ENCODE measurements at regions of chr1 and their contacts with region 1.

Region 1: DNA sequence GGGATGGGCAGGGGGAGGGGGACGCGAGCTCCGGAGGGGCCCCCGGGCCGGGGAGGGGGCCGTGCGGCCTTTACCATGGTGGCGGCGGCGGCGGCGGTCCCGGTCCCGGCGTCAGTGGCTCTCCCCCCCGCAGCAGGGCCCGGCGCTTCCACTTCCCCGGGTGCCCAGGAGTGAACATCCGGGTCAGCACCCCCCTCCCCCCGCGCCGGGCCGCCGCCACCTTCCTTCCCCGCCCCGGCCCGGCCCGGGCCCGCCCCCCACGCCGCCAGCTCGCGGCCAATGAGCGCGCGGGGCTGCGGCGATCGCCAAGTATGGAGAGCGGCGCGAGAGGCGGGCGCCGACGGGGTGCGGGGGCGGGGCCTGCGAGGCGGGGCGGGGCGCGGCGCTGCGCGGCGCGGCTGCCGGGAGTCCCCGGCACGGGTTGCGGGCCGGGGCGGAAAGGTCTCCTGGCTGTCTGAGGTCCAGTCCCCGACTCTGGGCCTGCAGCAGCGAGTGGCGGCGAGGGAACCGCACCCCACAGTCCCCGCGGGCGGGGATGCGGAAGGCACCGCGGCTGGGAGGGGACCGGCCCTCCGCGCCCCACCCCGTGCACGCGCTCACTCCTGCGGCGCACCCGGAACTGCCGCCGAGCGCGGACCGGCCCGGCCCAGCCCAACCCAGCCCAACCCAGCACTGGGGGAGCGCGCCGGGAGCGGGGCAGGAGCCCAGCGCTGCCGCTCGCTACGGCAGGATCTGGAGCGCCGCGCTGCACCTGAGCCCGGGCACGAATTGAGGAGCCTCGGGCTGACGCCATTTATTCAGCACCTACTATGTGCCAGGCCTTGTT is at the start of gene CAPZB:
- DNase-seq: peak; percentile 57 to 90
- H3K4me3 ChIP-seq: peak within 1 kb of the TSS; percentile 75
- H3K27ac ChIP-seq: peak within 1 kb of the TSS; percentile 72
- H3K4me1 ChIP-seq: peaks cover 26% of the 10 kb centered on the region
- H3K27me3 ChIP-seq: no peaks in the 10 kb centered on the region
- CTCF ChIP-seq: no peak
- total RNA-seq, gene CAPZB: 222 and 274 TPM in 2 replicates

Region 2: DNA sequence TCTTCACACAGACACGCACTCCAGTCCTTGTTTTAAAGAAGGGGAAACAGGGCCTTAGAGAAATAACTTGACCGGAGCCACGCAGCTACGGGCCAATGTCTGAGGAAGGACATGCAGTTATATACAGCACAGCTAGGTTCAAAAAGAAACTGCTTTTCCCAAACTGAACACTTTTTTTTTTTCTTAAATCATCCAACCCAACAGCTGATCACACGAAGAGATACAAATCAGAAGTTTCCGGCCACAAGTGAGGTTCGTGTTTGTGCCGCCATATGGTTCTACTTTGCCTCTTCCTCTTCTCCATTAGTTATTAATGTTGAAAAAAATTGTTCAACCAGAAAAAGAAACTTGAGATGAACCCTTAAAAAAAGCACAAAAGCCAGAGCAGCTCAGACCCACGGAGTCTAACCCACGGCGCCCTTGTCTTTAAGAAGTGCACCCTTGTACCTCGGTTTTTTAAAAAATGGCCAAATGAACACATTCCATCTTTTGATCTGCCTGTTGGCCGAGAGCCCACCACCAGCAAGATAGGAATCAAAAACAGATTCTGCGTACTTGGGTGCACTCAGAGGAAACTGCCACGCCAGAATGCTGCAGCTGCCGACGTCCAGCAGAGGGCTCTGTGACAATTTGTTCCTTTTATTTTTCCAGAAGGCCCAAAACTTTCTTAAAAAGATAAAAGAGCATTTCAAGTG is 94.5 kb before region 1 on chr1:
- CTCF ChIA-PET with region 1: no interaction called
- POLR2A ChIA-PET with region 1: no interaction called
- intact Hi-C with region 1: loop called (anchors 10 kb)
- DNase-seq: no peak
- H3K4me3 ChIP-seq: no peak overlapping the region
- H3K27ac ChIP-seq: no peak overlapping the region
- H3K4me1 ChIP-seq: no peaks in the 10 kb centered on the region
- H3K27me3 ChIP-seq: no peaks in the 10 kb centered on the region
- CTCF ChIP-seq: peak; percentile 68

Region 3: DNA sequence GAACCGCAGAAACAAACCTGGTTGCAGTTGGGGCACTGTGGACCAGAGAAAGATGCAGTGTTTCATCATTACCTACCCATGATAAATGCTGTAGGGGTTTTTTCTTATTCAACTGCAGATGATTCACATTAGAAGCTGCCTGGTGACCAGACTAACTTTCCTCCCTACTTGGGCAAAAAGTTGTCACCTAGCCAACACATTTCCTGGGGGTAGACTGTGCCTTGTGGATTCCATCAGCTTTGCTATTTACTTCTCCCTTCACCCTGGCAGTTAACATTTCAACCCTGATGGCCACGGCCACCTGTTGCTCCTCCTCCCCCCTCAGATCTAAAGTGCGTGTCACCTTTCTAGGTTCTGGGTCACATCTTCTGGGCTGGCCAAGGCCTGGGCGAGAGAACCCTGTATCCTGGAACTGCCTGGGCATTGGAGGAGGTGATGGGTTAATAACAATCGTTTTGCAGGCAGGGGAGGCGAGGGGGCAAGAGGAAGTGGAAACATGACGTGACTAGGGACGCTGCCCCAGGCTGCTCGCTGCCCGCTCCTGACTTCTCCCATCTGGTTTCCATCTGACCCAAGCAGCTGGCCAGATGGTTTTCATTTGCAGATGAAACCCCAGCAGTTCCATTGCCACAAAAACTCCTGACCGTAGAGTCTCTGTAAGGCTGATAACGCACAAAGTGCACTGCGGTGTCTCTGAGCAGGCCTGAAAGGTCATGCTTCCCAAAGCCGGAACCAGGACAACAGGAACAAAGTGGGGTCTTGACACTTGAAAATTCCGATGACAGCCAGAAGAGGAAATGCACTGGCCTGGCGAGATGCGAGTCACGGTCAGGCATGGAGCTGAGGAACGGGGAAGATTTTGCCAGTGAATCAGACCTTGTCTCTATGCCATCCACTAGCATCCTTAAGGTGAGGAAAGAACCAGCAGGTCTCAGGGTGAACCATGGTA is 36.8 kb before region 1 on chr1:
- CTCF ChIA-PET with region 1: no interaction called
- POLR2A ChIA-PET with region 1: interaction called, 5 read pairs
- intact Hi-C with region 1: loop called (anchors 1 kb)
- DNase-seq: peak; percentile 50 to 66
- H3K4me3 ChIP-seq: no peak overlapping the region
- H3K27ac ChIP-seq: peak overlapping the region; percentile 51
- H3K4me1 ChIP-seq: peaks cover 40% of the 10 kb centered on the region
- H3K27me3 ChIP-seq: no peaks in the 10 kb centered on the region
- CTCF ChIP-seq: no peak

Region 4: DNA sequence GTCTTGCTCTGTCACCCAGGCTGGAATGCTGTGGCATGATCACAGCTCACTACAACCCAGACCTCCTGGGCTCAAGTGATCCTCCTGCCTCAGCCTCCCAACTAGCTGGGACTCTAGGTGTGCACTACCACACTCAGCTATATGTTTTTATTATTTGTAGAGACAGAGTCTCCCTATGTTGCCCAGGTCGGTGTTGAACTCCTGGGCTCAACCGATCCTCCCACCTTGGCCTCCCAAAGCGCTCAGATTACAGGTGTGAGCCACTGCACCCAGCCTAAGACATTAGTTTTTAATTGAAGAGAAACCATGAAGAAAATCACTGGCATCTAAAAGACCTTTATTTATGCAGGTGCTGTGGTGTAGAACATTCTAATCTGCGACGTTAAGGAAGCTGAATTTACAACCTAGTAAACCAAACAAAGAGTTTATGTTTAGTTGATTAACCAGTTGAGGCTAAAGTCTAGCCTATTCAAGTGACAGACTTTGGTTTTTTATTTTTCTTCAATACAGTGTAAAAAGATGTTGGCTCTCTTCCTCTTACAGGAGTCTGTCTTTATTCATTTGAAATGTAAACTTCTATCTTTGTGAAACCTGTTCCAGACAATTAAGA is 106.0 kb after region 1 on chr1:
- CTCF ChIA-PET with region 1: no interaction called
- POLR2A ChIA-PET with region 1: interaction called, 15 read pairs
- intact Hi-C with region 1: loop called (anchors 5 kb)
- DNase-seq: no peak
- H3K4me3 ChIP-seq: no peak overlapping the region
- H3K27ac ChIP-seq: no peak overlapping the region
- H3K4me1 ChIP-seq: peaks cover 8% of the 10 kb centered on the region; the same call in 1 of the 2 replicates
- H3K27me3 ChIP-seq: no peaks in the 10 kb centered on the region
- CTCF ChIP-seq: no peak

Region 5: GRCh38 chr1:19643602-19644394 is 158.2 kb after region 1 on chr1 and contains the start of gene NBL1:
- CTCF ChIA-PET with region 1: no interaction called
- POLR2A ChIA-PET with region 1: interaction called, 24 read pairs
- intact Hi-C with region 1: loop called (anchors 5 kb)
- DNase-seq: peak in 1 of 2 experiments; percentile 45
- H3K4me3 ChIP-seq: peak within 1 kb of the TSS; percentile 66
- H3K27ac ChIP-seq: no peak within 1 kb of the TSS
- H3K4me1 ChIP-seq: peaks cover 35% of the 10 kb centered on the region
- H3K27me3 ChIP-seq: no peaks in the 10 kb centered on the region
- CTCF ChIP-seq: no peak
- total RNA-seq, gene NBL1: 32.5 and 36.9 TPM in 2 replicates

Measured in PC-9 (cell line).